ENCODE measurements at regions of chr7 and their contacts with region 1.

Region 1: DNA sequence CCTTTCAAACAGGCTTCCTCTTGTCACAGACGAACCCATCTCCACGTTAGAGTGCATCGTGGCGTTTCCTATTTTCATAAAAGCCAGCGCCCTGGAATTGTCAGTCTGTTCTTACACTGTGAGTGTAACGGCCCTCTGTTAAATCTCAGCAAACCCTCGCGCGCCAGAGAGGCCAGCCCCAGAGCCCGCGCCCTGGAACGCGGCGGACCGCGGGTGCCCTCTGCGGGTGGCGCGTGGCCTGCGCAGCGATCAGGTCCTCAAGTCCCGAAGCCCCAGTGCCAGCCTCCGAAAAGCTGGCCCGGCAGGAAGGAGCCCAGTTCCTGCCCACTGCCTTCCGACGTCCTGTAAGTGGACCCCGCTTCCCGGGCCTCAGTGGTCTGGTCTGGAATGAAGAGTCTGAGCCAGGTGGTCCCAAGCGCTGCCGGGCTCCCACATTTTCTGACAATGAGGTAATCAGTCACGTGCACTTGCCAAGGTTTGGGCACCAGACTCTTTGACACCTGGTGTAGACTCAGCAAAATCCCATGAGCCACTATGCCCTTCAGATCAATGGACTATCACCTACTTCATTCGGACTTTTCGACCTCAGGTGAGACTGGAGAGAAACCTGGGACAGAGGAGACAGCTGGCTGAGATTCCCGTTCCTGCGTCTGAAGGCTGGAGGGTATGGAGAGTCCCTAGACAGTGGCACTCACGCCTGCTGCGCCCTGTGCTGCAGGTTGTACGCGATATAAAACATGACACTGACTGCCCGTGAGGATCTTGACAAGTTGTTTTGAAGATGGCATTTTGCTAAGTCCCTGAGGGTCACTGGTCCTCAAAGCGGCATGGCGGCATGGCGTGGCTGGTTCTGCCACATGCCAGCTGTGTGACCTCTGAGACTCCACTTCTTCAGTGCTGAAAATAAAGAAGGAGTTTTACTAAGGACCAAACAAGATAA is 109.4 kb upstream of the LANCL2 start:
- DNase-seq: peak; percentile 86
- H3K4me3 Mint-ChIP-seq: peak overlapping the region; percentile 69
- H3K27ac Mint-ChIP-seq: no peak overlapping the region
- H3K4me1 Mint-ChIP-seq: peaks cover 8% of the 10 kb centered on the region
- H3K27me3 Mint-ChIP-seq: peaks cover 40% of the 10 kb centered on the region

Region 2: GRCh38 chr7:54758702-54759592 is 496.8 kb before region 1 on chr7 and contains the start of gene SEC61G:
- CTCF ChIA-PET with region 1: interaction called, 31 read pairs
- POLR2A ChIA-PET with region 1: interaction called, 14 read pairs
- intact Hi-C with region 1: no loop called
- DNase-seq: peak; percentile 97
- H3K4me3 Mint-ChIP-seq: peak within 1 kb of the TSS; percentile 100
- H3K27ac Mint-ChIP-seq: peak within 1 kb of the TSS; percentile 94
- H3K4me1 Mint-ChIP-seq: peaks cover 24% of the 10 kb centered on the region
- H3K27me3 Mint-ChIP-seq: peaks cover 4% of the 10 kb centered on the region
- total RNA-seq, gene SEC61G: 171 to 177 TPM

Region 3: DNA sequence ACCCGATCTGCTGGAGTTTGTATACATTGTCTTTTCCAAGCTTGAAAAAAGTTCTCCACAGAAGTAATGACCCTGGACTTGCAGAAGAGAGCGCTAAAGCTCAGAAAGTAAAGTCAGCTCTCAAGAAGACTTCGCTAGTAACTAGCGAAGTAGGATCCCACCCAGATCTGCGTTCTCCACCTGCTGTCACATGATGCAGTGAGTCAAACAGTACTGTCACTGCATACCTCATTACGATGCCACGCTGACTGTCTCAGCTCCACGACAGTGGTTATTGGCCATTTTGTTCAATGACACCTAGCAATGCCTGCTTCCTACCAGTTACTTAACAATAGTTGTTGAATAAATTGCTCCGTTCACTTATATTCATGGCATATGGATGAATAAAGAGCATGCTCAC is 467.1 kb before region 1 on chr7:
- CTCF ChIA-PET with region 1: interaction called, 51 read pairs
- POLR2A ChIA-PET with region 1: no interaction called
- intact Hi-C with region 1: loop called (anchors 1 kb)
- DNase-seq: peak; percentile 57
- H3K4me3 Mint-ChIP-seq: no peak overlapping the region
- H3K27ac Mint-ChIP-seq: no peak overlapping the region
- H3K4me1 Mint-ChIP-seq: peaks cover 5% of the 10 kb centered on the region
- H3K27me3 Mint-ChIP-seq: peaks cover 44% of the 10 kb centered on the region

Region 4: GRCh38 chr7:55086413-55087201 is 169.2 kb before region 1 on chr7:
- CTCF ChIA-PET with region 1: interaction called, 5 read pairs
- POLR2A ChIA-PET with region 1: no interaction called
- intact Hi-C with region 1: loop called (anchors 10 kb)
- DNase-seq: peak; percentile 24
- H3K4me3 Mint-ChIP-seq: no peak overlapping the region
- H3K27ac Mint-ChIP-seq: no peak overlapping the region
- H3K4me1 Mint-ChIP-seq: peaks cover 11% of the 10 kb centered on the region
- H3K27me3 Mint-ChIP-seq: peaks cover 12% of the 10 kb centered on the region

Region 5: DNA sequence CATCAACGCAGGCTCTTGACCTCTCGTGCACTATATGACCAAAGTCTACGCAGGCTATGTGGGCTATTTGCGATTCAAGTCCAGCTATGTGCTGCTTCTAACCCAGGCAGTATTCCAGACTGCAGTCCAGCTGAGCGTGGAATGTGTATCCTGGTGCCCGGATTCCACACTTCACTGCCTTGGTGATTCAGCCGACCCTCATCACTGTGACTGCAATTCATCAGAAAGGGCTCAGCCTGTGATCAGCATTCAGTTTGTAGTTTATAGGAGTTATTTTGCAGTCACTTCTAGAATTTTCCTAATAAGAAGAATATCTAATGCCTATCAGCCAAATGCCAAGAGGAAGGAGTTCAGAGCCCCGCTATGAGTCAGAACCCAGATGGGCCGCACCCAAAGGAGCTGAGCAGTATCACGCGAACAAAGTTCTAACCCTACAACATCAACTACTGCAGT is 10.5 kb before region 1 on chr7:
- CTCF ChIA-PET with region 1: interaction called, 20 read pairs
- POLR2A ChIA-PET with region 1: no interaction called
- intact Hi-C with region 1: no loop called
- DNase-seq: no peak
- H3K4me3 Mint-ChIP-seq: no peak overlapping the region
- H3K27ac Mint-ChIP-seq: no peak overlapping the region
- H3K4me1 Mint-ChIP-seq: no peaks in the 10 kb centered on the region
- H3K27me3 Mint-ChIP-seq: peaks cover 5% of the 10 kb centered on the region

Region 6: DNA sequence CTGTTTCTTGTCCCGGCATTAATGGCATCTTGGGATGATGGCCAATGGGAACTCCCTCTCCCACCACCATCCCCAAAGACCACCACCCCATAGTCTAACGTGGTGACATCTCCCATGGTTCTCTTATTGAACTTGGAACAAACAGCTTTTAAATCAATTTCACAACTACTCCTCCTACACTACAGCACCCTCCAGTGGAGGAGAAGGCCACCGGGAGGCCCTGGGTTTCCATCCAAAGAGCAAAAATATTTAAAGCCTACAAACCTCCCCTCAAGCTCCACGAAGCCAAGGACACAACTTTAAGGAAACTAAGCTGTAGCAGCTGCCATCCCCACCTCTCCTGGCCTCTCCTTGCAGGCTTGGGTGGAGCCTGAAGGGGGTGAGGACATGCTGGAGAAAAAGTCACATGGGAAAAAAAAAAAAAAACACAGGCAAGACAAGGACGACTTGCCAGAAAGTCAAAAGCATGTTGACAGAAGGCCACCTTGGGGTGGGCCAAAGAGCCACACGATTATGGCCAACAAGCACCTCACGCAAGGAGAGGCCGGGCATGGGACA is 15.4 kb after region 1 on chr7:
- CTCF ChIA-PET with region 1: interaction called, 27 read pairs
- POLR2A ChIA-PET with region 1: no interaction called
- intact Hi-C with region 1: no loop called
- DNase-seq: no peak
- H3K4me3 Mint-ChIP-seq: no peak overlapping the region
- H3K27ac Mint-ChIP-seq: no peak overlapping the region
- H3K4me1 Mint-ChIP-seq: no peaks in the 10 kb centered on the region
- H3K27me3 Mint-ChIP-seq: peaks cover 4% of the 10 kb centered on the region